ENCODE measurements at regions of chr17 and their contacts with region 1.

Region 1: DNA sequence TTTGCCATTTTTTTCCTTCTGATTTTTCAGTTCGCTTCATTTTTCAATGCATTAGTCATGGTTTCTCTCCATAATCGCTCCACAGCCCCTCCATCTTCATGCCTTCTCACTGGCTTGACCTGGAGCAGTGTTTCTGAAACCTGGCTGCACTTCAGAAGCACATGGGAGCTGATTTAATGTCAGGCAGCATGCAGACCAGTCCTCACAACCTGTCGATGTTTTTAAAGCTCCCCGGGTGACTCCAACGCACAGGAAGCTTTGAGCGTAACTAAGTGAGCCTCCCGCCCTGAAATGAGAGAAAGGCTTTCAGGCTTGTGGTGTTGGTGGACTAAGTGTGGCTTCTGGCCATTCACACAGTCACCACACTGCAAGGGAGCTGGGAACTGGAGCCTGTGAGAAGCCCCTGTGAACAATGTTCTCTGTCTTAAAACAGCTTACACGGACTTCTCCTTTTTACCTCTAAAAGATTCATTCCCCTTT is 16.8 kb upstream of the DRG2 start:
- DNase-seq: no peak
- H3K4me3 ChIP-seq: peak overlapping the region in 2 of 3 donors; percentile 18 to 29
- H3K27ac ChIP-seq: no peak overlapping the region
- H3K4me1 ChIP-seq: no peaks in the 10 kb centered on the region
- H3K27me3 ChIP-seq: no peaks in the 10 kb centered on the region
- CTCF ChIP-seq: no peak
- POLR2A ChIP-seq: no peak

Region 2: DNA sequence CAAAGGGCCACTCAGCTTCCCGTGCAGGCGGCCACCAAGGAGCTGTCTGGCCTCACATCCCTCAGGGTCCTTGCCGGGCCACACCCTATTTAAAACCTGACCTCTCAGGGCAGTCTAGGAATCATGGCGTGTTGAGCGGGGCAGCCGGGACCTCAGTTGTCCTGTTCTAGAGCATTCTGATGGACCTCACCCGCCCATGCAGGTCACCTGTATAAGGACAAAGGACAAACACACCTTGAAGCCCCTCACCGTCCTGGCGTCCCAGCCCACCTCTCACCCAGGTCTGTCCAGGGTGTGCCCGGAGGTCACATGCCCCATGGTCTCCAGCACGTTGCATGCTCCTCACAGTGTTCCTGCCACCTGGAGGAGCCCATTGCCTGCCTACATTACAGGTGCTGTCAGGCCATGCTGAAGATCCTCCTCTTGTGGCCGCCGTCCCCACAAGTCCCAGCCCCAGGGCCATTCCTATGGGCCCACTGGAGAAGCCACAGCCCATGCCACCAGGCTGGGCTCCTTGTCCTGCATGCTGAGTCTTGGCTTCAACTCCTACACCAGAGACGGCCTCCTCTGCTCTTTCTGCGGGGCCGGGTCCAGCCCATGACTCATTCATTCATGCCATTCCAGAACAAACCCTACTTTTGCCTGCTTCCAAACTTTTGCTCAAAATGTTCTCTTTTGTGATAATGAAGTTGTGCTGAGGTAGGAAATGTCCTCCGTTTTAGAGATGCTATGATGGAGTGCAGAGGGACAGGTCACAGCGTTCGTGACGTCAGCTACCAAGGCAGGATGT is 525.7 kb before region 1 on chr17:
- intact Hi-C with region 1: loop called (anchors 10 kb)
- DNase-seq: no peak
- H3K4me3 ChIP-seq: no peak overlapping the region
- H3K27ac ChIP-seq: peak overlapping the region in 1 of 2 donors; percentile 39
- H3K4me1 ChIP-seq: no peaks in the 10 kb centered on the region
- H3K27me3 ChIP-seq: no peaks in the 10 kb centered on the region
- CTCF ChIP-seq: no peak
- POLR2A ChIP-seq: no peak

Region 3: DNA sequence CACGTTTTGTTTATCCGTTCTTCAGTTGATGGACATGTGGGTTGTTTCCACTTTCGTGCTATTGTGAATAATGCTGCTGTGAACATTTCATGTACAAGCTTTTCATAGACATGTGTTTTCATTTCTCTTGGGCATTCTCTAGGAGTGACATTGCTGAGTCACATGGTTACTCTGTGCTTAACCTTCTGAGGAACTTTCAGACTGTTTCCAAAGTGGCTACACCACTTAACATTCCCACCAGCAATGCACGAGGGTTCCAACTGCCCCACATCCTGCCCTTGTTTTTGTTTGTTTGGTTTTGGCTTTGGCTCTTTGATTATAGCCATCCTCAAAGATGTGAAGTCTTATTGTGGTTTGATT is 465.2 kb before region 1 on chr17:
- intact Hi-C with region 1: no loop called
- DNase-seq: no peak
- H3K4me3 ChIP-seq: no peak overlapping the region
- H3K27ac ChIP-seq: peak overlapping the region in 1 of 2 donors; percentile 55
- H3K4me1 ChIP-seq: no peaks in the 10 kb centered on the region
- H3K27me3 ChIP-seq: no peaks in the 10 kb centered on the region
- CTCF ChIP-seq: no peak
- POLR2A ChIP-seq: no peak

Region 4: GRCh38 chr17:18056212-18056611 is 14.7 kb before region 1 on chr17:
- intact Hi-C with region 1: no loop called
- DNase-seq: no peak
- H3K4me3 ChIP-seq: no peak overlapping the region
- H3K27ac ChIP-seq: no peak overlapping the region
- H3K4me1 ChIP-seq: no peaks in the 10 kb centered on the region
- H3K27me3 ChIP-seq: no peaks in the 10 kb centered on the region
- CTCF ChIP-seq: no peak
- POLR2A ChIP-seq: no peak

Region 5: GRCh38 chr17:18117982-18118975 is 47.4 kb after region 1 on chr17:
- intact Hi-C with region 1: no loop called
- DNase-seq: no peak
- H3K4me3 ChIP-seq: no peak overlapping the region
- H3K27ac ChIP-seq: no peak overlapping the region
- H3K4me1 ChIP-seq: no peaks in the 10 kb centered on the region
- H3K27me3 ChIP-seq: no peaks in the 10 kb centered on the region
- CTCF ChIP-seq: no peak
- POLR2A ChIP-seq: no peak